ENCODE measurements at regions of chrX and their contacts with region 1.

Region 1: DNA sequence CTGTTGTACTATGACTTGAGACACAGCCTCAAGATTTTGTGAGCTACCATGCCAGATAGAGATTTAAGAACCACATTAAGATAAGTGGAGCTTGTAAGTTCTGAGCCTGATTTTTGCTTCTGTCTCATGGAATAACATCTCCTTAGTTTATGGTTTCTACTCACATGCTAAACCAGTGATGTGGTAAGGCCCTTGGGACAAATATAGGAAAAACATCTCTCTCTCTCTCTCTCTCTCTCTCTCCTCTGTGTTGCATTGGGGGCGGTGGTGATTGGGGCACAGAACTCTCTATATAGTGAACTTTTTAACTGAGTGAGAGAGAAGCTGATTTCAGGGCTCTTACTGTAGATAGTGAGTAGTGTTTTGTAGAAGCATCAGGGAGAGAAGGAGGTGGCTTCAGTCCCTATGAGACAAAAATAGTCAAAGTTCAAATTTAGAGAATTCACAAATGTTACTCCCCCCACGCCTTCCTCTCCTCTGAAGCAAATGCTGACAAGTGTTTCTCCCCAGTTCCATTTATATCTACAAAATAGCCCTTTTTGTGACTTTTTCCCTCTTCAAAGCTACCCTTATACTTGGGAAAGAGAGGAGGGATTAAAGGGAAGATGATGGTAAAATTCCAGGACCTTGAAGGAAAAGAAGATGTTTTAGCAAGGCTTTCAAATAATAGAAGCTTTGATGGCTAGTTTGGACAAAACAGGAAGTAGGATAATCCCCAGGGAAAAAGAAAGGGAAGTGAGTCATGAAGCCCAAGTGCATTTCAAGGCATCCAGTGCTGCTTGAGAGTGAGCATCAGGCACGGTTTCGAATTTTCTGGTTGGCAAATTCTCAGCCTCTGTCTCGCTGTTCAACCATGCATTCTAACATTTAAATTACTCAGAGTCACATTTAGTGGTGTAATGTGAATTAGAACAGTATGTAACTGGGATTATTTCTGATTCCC is 134.3 kb upstream of the AP1S2 start:
- DNase-seq: no peak
- ATAC-seq: peak; percentile 89
- H3K4me3 Mint-ChIP-seq: peak overlapping the region; percentile 64
- H3K27ac Mint-ChIP-seq: peak overlapping the region; percentile 88
- H3K4me1 Mint-ChIP-seq: peaks cover 26% of the 10 kb centered on the region
- H3K27me3 Mint-ChIP-seq: no peaks in the 10 kb centered on the region
- CTCF ChIP-seq: no peak

Region 2: GRCh38 chrX:15804563-15804962 is 184.4 kb before region 1 on chrX:
- CTCF ChIA-PET with region 1: no interaction called
- POLR2A ChIA-PET with region 1: no interaction called
- intact Hi-C with region 1: no loop called
- DNase-seq: no peak
- ATAC-seq: no peak
- H3K4me3 Mint-ChIP-seq: no peak overlapping the region
- H3K27ac Mint-ChIP-seq: no peak overlapping the region
- H3K4me1 Mint-ChIP-seq: peaks cover 8% of the 10 kb centered on the region
- H3K27me3 Mint-ChIP-seq: no peaks in the 10 kb centered on the region
- CTCF ChIP-seq: no peak

Region 3: DNA sequence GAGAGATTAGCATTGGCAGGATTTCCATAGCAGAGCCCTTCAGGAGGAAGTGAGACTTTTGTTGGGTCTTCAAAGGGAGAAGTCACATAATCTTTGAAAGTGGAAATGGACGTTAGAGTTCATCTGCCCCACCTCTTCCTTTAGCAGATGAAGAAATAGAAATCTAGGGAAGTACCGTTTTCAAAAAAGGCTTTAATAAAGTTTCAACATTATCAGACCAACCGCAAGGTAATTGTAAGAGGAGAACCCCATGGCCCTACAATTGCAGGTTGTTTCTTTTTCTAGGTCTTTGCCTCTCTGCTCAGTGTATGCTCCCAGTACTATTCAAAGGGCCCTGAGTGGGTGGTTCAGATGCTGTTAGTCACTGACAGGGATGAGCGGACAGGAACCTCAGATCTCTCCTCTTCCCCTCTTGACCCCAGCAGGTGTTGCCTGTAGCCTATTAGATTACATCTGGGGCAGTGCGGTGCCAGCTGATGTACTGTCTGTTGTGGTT is 85.7 kb before region 1 on chrX:
- CTCF ChIA-PET with region 1: no interaction called
- POLR2A ChIA-PET with region 1: no interaction called
- intact Hi-C with region 1: loop called (anchors 5 kb)
- DNase-seq: peak; percentile 17
- ATAC-seq: peak; percentile 88
- H3K4me3 Mint-ChIP-seq: peak overlapping the region; percentile 57
- H3K27ac Mint-ChIP-seq: peak overlapping the region; percentile 88
- H3K4me1 Mint-ChIP-seq: peaks cover 26% of the 10 kb centered on the region
- H3K27me3 Mint-ChIP-seq: no peaks in the 10 kb centered on the region
- CTCF ChIP-seq: no peak

Region 4: GRCh38 chrX:16394290-16394689 is 405.4 kb after region 1 on chrX:
- CTCF ChIA-PET with region 1: no interaction called
- POLR2A ChIA-PET with region 1: no interaction called
- intact Hi-C with region 1: no loop called
- DNase-seq: no peak
- ATAC-seq: no peak
- H3K4me3 Mint-ChIP-seq: no peak overlapping the region
- H3K27ac Mint-ChIP-seq: no peak overlapping the region
- H3K4me1 Mint-ChIP-seq: no peaks in the 10 kb centered on the region
- H3K27me3 Mint-ChIP-seq: no peaks in the 10 kb centered on the region
- CTCF ChIP-seq: no peak

Measured in activated B cell treated with CpG ODN at 0.5 μM for 24 hours (primary cell).